Aorta (tissue), 5 donors: ENCODE measurements at regions of chr5 and their contacts with region 1.

Region 1: GRCh38 chr5:133111299-133111698 is 59.5 kb downstream of the HSPA4 start:
- DNase-seq: peak; percentile 90 to 97
- ATAC-seq: peak; percentile 90
- H3K4me3 ChIP-seq: no peak overlapping the region
- H3K27ac ChIP-seq: no peak overlapping the region
- H3K4me1 ChIP-seq: no peaks in the 10 kb centered on the region
- H3K27me3 ChIP-seq: no peaks in the 10 kb centered on the region

Region 2: DNA sequence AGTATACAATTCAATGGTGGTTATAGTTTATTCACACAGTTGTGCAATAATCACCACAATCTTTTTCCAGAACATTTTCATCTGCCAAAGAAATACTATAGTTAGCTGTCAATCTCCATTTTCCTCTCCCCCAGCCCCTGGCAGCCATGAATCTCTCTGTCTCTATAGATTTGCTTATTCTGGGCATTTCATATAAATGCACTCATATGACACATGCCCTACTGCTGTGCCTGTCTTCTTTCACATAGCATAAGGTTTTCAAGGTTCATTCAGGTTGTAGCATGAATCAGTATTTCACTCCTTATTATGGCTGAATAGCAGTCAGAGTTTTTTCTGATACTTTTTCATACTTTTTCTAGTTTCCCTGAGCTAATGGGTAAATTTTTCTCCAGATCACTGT is 68.1 kb after region 1 on chr5:
- intact Hi-C with region 1: no loop called
- DNase-seq: no peak
- ATAC-seq: no peak
- H3K4me3 ChIP-seq: no peak overlapping the region
- H3K27ac ChIP-seq: no peak overlapping the region
- H3K4me1 ChIP-seq: no peaks in the 10 kb centered on the region
- H3K27me3 ChIP-seq: no peaks in the 10 kb centered on the region

Region 3: DNA sequence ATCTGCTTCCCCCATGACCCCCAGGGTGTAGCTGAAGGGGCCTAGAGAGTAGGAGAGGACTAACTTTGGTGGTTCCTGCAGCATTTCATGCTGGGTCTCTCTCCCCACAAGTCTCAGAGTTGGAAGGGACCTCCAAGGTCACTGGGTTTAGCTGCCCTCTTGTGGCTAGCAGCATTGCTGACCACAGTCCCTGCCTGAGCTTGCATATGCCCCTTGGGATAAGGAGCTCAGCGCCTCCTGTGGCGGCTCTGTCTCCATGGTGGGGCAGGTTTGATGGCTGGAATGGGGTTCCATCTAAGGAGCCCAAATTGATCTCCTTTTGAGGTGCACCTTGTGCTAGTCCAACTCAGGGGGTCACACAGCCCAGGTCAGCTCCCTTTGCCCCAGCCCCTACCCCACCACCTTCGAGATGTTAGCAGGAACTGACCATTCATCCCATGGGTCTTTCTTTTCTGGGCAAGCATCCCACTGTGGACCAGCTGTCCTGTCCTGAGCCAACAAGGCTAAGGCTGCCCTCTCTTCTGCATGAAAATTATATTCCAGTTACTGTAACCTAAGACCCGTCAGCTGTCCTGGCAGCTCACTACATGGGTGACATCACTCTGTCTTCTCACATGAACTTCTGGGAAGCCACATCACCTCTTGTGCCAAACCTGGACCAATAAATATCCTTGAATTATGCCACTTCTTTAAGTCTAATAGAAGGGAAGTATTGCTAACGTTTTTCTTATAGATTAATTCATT is 136.8 kb after region 1 on chr5:
- intact Hi-C with region 1: loop called (anchors 2 to 5 kb)
- DNase-seq: no peak
- ATAC-seq: peak; percentile 54
- H3K4me3 ChIP-seq: no peak overlapping the region
- H3K27ac ChIP-seq: no peak overlapping the region
- H3K4me1 ChIP-seq: no peaks in the 10 kb centered on the region
- H3K27me3 ChIP-seq: no peaks in the 10 kb centered on the region

Region 4: GRCh38 chr5:133287500-133287899 is 176.2 kb after region 1 on chr5:
- intact Hi-C with region 1: loop called (anchors 5 to 10 kb)
- DNase-seq: peak in 1 of 2 donors; percentile 79
- ATAC-seq: peak; percentile 47
- H3K4me3 ChIP-seq: no peak overlapping the region
- H3K27ac ChIP-seq: no peak overlapping the region
- H3K4me1 ChIP-seq: no peaks in the 10 kb centered on the region
- H3K27me3 ChIP-seq: no peaks in the 10 kb centered on the region

Region 5: GRCh38 chr5:134145779-134146581 is 1034.7 kb after region 1 on chr5:
- intact Hi-C with region 1: loop called in 1 of 2 experiments (anchors 10 kb)
- DNase-seq: peak; percentile 82 to 91
- ATAC-seq: peak; percentile 77
- H3K4me3 ChIP-seq: no peak overlapping the region
- H3K27ac ChIP-seq: no peak overlapping the region
- H3K4me1 ChIP-seq: no peaks in the 10 kb centered on the region
- H3K27me3 ChIP-seq: no peaks in the 10 kb centered on the region